ENCODE measurements at regions of chr5 and their contacts with region 1.

Region 1: DNA sequence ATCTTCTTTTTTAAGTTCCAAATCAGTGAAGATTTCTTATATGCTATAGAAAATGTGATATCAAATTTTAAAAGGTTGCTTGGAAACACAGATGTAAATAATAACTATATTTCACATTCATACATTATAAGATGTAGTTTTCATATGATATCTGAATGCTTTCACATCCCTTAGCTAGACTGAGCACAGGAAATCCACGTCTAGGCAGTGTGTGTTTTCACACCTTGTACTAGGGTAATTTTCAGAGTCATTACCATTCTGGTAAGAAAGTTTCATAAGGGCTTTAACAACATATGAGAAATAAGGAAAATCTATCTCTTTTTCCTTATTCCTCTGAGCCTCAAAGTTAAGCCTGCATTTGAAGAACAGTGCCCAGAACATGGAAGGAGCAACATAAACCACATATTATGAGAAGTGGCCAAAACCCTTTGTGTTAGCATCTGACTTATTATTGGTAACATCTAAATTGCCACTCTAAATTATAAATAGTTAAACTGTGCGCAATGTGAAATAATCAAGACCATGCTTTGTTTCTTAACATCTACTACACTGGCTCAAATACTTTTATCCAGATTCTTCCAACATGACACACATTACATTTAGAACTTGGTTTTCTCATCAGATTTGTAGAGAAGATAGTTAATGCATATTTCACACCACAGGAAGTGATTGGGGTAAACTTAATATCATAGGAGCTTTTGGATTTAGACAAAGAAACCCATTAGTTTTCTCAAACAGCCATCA is 113.3 kb downstream of the PPP2R2B start:
- DNase-seq: no peak
- H3K4me3 ChIP-seq: no peak overlapping the region
- CTCF ChIP-seq: no peak
- POLR2A ChIP-seq: no peak

Region 2: DNA sequence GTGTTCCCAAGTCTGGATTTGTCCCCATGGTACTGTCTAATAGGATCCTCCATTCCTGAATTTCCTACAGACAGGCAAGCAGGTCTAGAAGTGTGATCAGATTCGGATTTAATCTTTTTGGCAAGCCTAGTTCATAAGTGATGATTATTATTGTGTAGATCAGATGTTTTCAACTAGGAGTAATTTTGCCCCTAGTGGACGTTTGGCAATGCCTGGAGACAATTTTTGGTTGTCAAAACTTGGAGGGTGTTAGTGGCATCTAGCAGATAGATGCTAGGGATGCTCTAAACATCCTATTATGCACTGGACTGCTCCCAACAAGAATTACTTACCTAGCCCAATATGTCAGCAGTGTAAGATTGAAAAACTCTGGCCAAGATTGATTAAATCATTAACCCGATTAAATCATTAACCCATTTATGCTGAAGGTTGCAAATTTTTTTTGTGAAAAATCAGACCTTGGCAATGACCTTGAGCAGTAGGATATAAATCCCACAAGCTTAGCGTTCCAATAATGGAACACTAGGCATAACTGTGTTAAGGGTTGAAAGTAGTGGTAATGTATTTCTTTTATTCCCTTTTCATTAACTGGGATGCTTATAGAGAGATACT is 290.0 kb before region 1 on chr5:
- intact Hi-C with region 1: no loop called
- DNase-seq: no peak
- H3K4me3 ChIP-seq: no peak overlapping the region
- CTCF ChIP-seq: no peak
- POLR2A ChIP-seq: no peak

Region 3: DNA sequence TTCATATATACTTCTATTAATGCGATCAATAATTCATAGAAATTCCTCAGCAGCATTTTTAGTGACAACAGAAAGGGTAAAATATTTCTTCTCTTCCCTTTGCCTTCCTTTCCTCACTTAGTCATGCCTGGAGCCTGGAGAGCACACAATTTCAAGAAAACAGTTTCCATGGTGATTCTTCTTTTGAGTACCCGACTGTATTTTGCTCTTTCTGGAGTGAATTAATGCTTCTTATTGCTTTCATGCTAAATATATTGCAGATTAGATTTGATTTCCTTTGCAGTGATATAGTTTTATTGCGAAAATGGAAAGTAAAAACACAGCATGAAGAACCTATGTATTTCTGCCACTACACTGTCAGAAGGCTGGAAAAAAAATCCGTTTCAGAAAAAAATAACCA is 40.2 kb before region 1 on chr5:
- intact Hi-C with region 1: loop called (anchors 2 kb)
- DNase-seq: no peak
- H3K4me3 ChIP-seq: no peak overlapping the region
- CTCF ChIP-seq: no peak
- POLR2A ChIP-seq: no peak

Measured in lower leg skin (tissue), 4 donors.